GM10248 (cell line): ENCODE measurements at regions of chr3 and their contacts with region 1.

Region 1: DNA sequence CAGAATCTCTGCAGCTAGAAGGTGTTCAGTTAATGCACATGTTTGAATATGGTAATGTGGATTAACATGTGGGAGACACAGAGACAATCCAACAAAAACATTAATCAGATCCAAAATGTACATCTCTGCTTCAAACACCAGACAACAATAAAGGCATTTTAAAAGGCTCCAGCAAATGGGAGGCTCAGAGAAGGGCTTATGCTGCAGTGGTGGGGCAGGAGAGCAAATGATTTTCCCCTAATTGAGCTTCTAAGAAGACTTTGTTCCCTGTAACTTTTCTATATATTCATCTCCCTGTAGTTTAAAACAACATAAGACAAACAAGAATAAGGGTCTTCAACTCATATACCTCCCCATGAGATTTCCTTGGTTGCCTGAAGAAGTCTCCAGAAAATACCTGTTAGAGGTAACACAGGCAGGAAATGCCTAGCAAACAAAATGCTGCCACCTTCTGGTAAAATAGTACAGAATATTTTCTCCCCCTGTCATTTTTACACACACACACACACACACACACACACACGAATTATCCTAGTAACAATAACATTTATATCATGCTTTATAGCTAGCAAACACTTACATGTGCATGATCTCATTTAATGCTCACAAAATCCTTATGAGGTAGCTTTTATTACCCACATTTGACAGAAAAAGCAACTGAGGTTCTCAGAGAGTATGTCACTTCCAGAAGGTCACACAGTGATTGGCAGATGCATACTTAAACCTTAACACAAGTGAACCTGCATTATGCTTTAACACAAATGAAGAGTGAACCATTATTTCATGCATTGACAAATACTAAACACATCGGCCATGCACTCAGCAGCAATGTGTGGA is 123.4 kb upstream of the MB21D2 start:
- DNase-seq: peak; percentile 44
- CTCF ChIP-seq: peak; percentile 55

Region 2: GRCh38 chr3:192802957-192803899 is 237.8 kb before region 1 on chr3:
- CTCF ChIA-PET with region 1: interaction called, 19 read pairs
- POLR2A ChIA-PET with region 1: no interaction called
- DNase-seq: peak; percentile 33
- CTCF ChIP-seq: peak; percentile 42

Region 3: GRCh38 chr3:192933779-192934460 is 107.1 kb before region 1 on chr3:
- CTCF ChIA-PET with region 1: interaction called, 10 read pairs
- POLR2A ChIA-PET with region 1: no interaction called
- DNase-seq: no peak
- CTCF ChIP-seq: no peak

Region 4: GRCh38 chr3:193030276-193030675 is 10.8 kb before region 1 on chr3:
- CTCF ChIA-PET with region 1: interaction called, 16 read pairs
- POLR2A ChIA-PET with region 1: no interaction called
- DNase-seq: no peak
- CTCF ChIP-seq: no peak